Activated naive CD8-positive, alpha-beta T cell treated with anti-CD3 and anti-CD28 coated beads, Interleukin-2, amount 10 ng/mL, durations not matched to agents 7 days and 5 days (primary cell): ENCODE measurements at regions of chr4 and their contacts with region 1.

Region 1: DNA sequence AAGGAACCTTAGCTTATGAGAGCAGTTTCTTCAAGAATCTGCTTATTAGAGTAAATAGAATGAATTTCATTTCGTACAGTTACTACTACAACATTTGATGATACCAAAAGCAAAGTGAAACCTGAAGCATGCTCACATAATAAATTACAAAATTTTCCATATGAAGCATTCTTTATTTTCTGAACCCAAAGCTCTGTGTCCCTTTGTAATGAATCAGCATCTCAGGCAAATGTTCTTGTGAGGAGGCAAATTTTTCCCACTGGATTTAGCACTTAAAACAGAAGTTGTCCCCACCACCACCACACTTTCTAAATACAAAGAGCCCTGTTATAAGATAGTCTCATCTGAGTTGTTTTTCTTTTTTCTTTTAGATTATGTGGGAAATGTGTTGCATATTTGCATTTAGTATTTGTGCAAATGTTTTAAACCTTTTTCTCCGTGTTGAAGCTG is 70.7 kb upstream of the NFKB1 start:
- DNase-seq: no peak
- ATAC-seq: peak; percentile 11
- H3K4me3 Mint-ChIP-seq: peak overlapping the region; percentile 91
- H3K27ac Mint-ChIP-seq: peak overlapping the region; percentile 86
- H3K4me1 Mint-ChIP-seq: peaks cover 16% of the 10 kb centered on the region
- H3K27me3 Mint-ChIP-seq: no peaks in the 10 kb centered on the region

Region 2: GRCh38 chr4:102344954-102345794 is 85.3 kb before region 1 on chr4 and contains the start of gene SLC39A8:
- POLR2A ChIA-PET with region 1: interaction called, 31 read pairs
- DNase-seq: peak; percentile 87
- ATAC-seq: peak; percentile 74
- H3K4me3 Mint-ChIP-seq: peak within 1 kb of the TSS; percentile 91
- H3K27ac Mint-ChIP-seq: peak within 1 kb of the TSS; percentile 96
- H3K4me1 Mint-ChIP-seq: peaks cover 34% of the 10 kb centered on the region
- H3K27me3 Mint-ChIP-seq: peaks cover 4% of the 10 kb centered on the region
- total RNA-seq, gene SLC39A8: 60.9 to 66.5 TPM